GM23248 (cell line): ENCODE measurements at regions of chr11 and their contacts with region 1.

Region 1: DNA sequence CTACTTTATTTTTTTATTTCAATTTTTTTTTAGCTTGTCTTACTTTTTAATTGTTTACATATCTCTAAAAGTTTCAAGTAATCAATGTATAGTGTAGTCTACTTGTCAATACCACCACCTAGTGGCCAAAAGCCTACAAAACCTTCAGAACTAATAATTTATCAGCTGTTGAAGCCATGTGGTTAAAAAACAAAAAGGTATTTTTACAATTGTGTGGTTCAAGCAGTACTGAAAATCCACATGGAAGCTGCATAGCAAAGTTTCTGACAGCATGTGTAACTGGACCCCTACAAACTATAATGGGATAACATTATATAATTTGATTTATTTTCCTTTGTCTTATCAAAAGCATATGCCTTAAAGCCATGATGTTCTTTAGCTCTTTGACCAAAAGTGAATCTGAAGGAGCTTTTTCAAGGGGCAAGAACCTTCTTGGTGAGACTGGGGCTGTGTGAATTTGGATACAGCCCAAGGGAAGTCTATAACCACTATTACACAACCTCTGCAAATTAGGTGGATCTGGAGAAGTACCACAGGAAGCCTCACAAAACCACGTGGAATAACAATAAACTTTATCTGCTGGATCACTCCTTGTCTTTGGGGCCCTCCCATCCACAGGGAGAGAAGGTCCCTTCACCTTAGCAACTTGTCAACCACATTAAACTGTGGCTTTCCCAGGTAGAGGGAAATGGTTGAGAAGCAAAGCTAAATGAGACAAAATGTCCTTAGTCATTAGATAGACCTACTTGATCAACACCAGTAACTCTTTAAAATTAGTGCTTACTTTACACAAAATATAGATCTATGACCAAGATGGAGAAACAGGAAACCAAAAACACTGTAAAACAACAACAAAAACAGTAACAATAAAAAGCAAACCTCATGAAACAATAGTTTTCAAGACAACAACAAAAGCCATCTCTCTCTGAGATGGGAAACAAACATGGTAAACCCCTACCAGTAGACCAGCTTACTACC is 9.9 kb downstream of the NARS2 start:
- DNase-seq: peak; percentile 73
- H3K4me3 ChIP-seq: no peak overlapping the region
- H3K27ac ChIP-seq: no peak overlapping the region
- H3K4me1 ChIP-seq: peaks cover 45% of the 10 kb centered on the region
- H3K27me3 ChIP-seq: no peaks in the 10 kb centered on the region

Region 2: DNA sequence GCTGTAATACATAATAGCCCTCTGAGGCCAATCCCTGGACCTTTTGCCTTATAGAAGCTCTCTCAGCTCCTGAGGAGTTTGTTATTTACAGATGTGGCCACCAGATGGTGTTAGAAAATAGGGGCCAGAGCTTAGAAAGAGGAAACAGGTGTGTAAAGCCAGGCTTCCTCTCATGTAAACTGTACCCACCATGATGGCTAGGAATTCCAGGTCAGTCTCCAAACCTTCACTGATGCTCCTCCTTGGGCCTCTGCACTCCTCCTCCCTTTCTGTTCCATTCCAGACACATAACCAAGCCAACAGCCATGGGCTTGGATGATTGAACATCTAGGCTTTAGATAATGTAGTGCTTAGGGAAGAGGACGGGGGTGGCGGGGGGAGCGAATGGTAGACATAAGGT is 336.3 kb before region 1 on chr11:
- in situ Hi-C with region 1: loop called (anchors 10 kb)
- DNase-seq: peak; percentile 66
- H3K4me3 ChIP-seq: no peak overlapping the region
- H3K27ac ChIP-seq: no peak overlapping the region
- H3K4me1 ChIP-seq: peaks cover 14% of the 10 kb centered on the region
- H3K27me3 ChIP-seq: no peaks in the 10 kb centered on the region

Region 3: GRCh38 chr11:78416305-78417178 is 148.2 kb before region 1 on chr11:
- in situ Hi-C with region 1: loop called (anchors 10 kb)
- DNase-seq: peak; percentile 96
- H3K4me3 ChIP-seq: peak overlapping the region; percentile 82
- H3K27ac ChIP-seq: peak overlapping the region; percentile 96
- H3K4me1 ChIP-seq: peaks cover 29% of the 10 kb centered on the region
- H3K27me3 ChIP-seq: no peaks in the 10 kb centered on the region

Region 4: GRCh38 chr11:78508503-78508902 is 56.3 kb before region 1 on chr11:
- in situ Hi-C with region 1: no loop called
- DNase-seq: no peak
- H3K4me3 ChIP-seq: no peak overlapping the region
- H3K27ac ChIP-seq: no peak overlapping the region
- H3K4me1 ChIP-seq: no peaks in the 10 kb centered on the region
- H3K27me3 ChIP-seq: no peaks in the 10 kb centered on the region